ENCODE measurements at regions of chr2 and their contacts with region 1.

Region 1: DNA sequence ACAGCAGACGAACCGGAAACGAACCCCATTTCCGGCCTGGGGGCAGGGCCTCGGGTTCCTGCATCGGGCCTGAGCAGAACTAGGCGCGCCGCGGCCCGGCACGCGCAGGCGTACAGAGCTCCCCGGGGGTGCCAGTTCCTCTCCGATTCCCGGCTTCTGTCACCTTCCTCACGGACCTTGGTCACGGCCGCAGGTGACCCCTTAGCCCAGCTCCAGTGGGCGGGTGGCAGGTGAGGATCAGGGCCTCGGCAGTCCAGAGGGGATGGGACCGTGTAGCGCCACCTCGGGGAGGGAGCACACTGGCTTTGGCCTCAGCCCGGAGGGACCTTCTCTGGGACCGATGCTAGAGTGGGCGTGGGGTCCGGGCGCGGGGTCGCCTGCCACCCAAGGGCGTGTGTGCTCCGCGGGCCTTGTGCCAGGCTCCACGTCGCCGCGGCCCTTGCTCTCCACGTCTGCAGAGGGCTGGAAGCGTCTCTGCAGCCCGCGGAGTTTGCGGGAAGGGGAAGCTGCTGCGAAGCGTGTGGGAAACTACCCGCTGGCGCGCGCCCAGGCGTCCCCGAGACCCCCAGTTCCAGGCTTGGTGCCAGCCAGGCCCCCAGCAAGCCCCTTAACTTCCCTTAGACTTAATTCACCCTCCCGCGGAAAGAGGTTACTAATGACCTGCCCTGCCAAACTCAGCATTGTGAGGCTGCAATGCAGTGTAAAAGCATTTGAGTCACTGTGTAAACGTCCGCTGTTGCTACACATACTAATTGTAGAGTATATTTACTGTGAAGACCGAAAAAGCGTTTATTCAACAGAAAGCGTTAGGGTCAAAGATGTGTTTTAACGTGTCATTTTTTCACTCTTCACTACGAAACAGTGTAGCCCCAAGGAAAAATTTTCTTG is at the start of gene TRAPPC12:
- DNase-seq: peak; percentile 91
- H3K4me3 Mint-ChIP-seq: peak within 1 kb of the TSS; percentile 99
- H3K27ac Mint-ChIP-seq: peak within 1 kb of the TSS; percentile 98
- H3K4me1 Mint-ChIP-seq: peaks cover 48% of the 10 kb centered on the region
- H3K27me3 Mint-ChIP-seq: no peaks in the 10 kb centered on the region
- total RNA-seq, gene TRAPPC12: 87.3 and 101 TPM in 2 replicates

Region 2: DNA sequence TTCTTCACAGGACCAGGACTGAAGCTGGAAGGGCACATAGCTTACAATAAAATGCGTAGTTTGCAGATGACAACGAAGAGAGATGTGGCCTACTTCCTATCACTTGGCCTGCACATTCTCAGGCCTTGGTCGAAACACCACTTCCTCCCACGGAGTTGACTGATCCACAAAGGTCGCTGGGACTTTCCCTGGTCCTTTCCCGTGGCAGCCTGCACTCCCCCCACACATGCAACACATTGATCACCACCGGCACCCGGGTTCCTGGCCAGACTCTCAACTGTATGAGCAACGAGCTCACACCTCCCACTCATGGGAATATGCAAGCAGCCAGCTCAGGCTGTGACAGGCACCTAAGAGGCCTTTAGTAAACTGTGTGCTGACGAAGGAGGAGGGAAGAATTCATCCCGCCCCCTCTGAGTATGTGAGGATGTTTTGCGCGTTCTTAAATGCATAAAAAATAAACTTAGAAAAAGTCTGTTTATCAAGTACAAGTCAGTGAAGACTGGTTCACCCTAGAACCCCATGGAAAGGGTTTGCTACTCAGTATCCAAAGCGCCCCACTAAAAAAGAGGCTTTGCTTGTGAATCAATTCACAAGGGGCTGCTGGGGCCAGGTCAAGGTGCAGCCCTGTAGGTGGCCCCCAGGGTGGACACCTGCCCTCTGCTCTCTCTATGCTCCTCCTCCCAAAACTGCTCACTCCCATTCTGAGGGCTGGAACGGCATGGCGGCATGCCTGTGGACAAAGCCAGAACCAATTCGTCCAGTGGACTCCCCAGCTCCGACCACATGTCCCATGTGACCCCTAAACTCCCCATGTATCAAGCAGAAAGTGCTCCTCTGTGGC is 156.6 kb before region 1 on chr2:
- intact Hi-C with region 1: loop called (anchors 1 kb)
- DNase-seq: peak; percentile 75
- H3K4me3 Mint-ChIP-seq: peak overlapping the region; percentile 40
- H3K27ac Mint-ChIP-seq: peak overlapping the region; percentile 100
- H3K4me1 Mint-ChIP-seq: peaks cover 61% of the 10 kb centered on the region
- H3K27me3 Mint-ChIP-seq: no peaks in the 10 kb centered on the region

Region 3: DNA sequence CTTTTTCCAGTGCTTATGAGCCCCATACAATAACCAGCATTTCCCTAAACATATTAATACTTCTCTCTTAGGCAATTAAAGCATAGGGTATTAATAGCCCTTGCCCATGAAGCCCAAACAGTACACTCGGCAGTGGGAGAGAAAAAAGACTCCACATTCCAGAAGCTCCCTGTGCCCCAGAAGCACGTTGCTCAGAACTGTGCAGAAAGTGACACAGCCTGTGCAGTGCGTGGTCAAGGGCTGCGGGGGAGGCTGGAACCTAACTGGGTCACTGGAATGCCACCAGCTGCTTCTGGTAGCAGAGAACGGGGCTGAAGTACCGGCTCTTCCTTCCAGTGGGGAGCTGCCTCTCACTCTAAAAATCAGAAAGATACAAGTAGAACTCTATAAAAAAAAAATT is 35.0 kb before region 1 on chr2:
- intact Hi-C with region 1: no loop called
- DNase-seq: no peak
- H3K4me3 Mint-ChIP-seq: no peak overlapping the region
- H3K27ac Mint-ChIP-seq: no peak overlapping the region
- H3K4me1 Mint-ChIP-seq: peaks cover 6% of the 10 kb centered on the region
- H3K27me3 Mint-ChIP-seq: no peaks in the 10 kb centered on the region

Region 4: DNA sequence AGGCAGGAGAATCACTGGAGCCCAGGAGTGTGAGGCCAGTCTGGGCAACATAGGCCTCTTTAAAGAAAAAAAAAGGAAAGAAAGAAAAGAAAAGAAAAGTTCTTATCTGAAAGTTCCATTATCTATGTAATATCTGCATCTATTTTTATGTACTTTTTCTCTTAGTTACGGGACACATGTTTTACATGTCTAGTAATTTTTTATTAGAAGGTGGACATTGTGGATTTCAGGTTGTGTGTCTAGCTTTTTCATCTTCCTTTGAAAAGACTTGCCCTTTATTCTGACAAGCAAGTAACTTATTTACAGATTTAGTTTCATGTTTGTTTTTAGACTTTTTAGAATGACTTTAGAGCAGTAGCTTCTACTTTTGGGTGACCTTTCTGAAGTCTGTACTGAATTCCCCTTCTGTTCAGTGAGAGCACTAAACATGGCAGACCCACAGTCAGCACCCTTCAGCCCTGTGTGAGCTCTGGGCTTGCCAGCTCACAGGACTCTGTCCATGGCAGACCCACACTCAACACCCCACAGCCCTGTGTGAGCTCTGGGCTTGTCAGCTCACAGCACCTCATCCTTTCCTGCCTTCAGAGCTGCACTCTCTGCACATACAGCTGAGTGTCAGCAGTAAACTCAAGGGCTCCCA is 17.1 kb after region 1 on chr2:
- intact Hi-C with region 1: loop called (anchors 1 kb)
- DNase-seq: no peak
- H3K4me3 Mint-ChIP-seq: no peak overlapping the region
- H3K27ac Mint-ChIP-seq: no peak overlapping the region
- H3K4me1 Mint-ChIP-seq: no peaks in the 10 kb centered on the region
- H3K27me3 Mint-ChIP-seq: no peaks in the 10 kb centered on the region

Region 5: DNA sequence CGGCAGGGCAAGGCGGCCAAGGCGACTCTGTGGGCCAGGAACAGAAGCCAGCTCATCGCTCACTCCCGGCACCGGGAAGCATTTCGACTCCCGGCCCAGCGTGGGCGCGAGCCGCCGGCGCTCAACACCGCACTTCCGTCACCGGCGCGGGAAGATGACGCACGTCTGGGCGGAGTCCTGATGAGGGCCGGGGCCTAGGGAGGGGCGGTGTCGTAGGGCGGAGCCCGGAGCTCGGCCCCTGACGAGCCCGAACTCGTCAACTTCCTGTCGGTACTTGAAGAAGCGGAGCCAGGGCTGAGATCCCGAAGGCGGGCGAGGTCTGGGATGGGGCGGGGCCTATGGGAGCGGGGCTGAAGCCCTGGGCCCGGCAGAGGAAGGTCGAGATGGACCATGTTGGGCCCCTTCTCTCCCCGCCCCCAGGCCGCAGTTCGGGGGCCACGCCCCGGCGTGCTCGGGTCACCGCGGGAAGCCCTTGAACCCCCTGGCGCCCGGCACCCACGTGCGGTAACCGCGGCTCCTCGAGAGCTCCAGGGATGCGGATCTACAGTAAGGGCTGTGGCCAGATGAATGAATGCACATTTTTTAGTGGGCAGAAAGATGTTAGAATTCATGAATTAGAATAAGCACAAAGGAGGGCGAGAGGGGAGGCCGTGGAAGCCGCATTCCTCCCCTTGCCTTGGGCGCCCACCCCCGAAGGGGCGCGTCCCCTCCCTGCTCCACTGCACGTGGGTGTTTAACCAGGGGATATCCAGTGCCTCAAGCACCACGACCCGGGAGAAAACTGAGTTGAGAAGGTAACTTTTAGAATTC is 178.5 kb after region 1 on chr2 and contains the start of gene RNASEH1:
- intact Hi-C with region 1: loop called (anchors 1 kb)
- DNase-seq: peak; percentile 98
- H3K4me3 Mint-ChIP-seq: peak within 1 kb of the TSS; percentile 93
- H3K27ac Mint-ChIP-seq: peak within 1 kb of the TSS; percentile 97
- H3K4me1 Mint-ChIP-seq: peaks cover 20% of the 10 kb centered on the region
- H3K27me3 Mint-ChIP-seq: no peaks in the 10 kb centered on the region
- total RNA-seq, gene RNASEH1: 30.5 and 31.6 TPM in 2 replicates

Region 6: GRCh38 chr2:3604991-3605961 is 225.4 kb after region 1 on chr2:
- intact Hi-C with region 1: loop called (anchors 5 kb)
- DNase-seq: no peak
- H3K4me3 Mint-ChIP-seq: peak overlapping the region; percentile 33
- H3K27ac Mint-ChIP-seq: peak overlapping the region; percentile 64
- H3K4me1 Mint-ChIP-seq: no peaks in the 10 kb centered on the region
- H3K27me3 Mint-ChIP-seq: peaks cover 2% of the 10 kb centered on the region

Measured in activated T-helper 1 cell treated with anti-CD3 and anti-CD28 coated beads, Interleukin-12 subunit alpha, Interleukin-12 subunit beta, Interleukin-2, Interleukin-4 antibody, amounts not matched to agents 30 ng/mL and 10 ng/mL and 1 ng/mL, durations not matched to agents 14 hours and 24 hours and 36 hours (primary cell).